ENCODE measurements at regions of chr3 and their contacts with region 1.

Region 1: DNA sequence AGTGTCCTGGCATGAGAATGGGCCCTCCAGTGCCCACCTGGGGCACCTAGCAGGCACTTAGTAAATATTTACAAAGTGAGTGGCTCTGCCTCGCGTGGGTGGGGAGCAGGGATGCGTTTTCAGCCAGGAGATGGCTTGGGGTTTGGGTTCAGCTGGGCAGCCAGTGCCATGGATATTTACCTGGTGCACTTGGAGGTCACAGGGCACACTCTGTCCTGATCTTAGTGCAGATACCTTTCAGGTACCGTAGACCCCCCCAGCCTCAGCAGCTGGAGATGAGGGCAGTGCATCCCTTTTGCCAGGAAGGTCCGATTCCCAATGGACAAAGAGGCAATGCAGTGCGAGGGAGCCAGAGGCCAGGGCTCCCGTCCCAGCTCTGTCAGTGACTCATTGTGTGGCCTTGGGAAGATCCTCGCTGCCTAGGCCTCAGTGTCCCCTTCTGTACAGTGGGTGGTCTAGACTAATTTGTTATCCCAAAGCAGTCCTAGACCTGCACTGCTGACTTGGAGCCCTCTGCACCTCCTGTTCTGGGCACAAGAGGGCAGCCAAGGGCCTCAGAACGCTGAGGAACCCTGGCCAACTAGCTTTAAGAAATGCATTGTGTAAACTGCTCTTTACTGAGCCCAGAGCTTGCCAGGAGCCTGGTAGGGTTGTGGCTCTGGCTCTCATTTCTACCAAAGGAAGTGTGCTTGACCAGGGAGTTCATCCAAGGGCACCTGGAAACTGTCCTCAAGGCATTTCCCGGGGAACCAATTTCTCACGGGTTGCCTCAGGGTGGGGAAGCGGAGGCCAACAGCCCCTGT is 16.0 kb downstream of the HDAC11 start:
- DNase-seq: peak; percentile 54 to 91
- H3K4me3 ChIP-seq: no peak overlapping the region
- H3K27ac ChIP-seq: no peak overlapping the region
- H3K4me1 ChIP-seq: peaks cover 0 to 3% (median 1%) of the 10 kb centered on the region in 4 experiments; a peak in 2 of 7 replicates
- H3K27me3 ChIP-seq: no peaks in the 10 kb centered on the region
- CTCF ChIP-seq: peak in 2 of 3 experiments; percentile 98; a peak in 3 of 4 replicates
- EP300 ChIP-seq: no peak
- POLR2A ChIP-seq: no peak
- RAD21 ChIP-seq: peak; percentile 99 to 100

Region 2: GRCh38 chr3:13479581-13480339 is 16.4 kb before region 1 on chr3 and contains the start of gene HDAC11:
- CTCF ChIA-PET with region 1: interaction called, 159 read pairs
- POLR2A ChIA-PET with region 1: no interaction called
- DNase-seq: peak; percentile 98 to 99
- H3K4me3 ChIP-seq: peak within 1 kb of the TSS; percentile 54 to 80 (median 72)
- H3K27ac ChIP-seq: peak within 1 kb of the TSS; percentile 58
- H3K4me1 ChIP-seq: peaks cover 3 to 20% (median 8%) of the 10 kb centered on the region in 4 experiments
- H3K27me3 ChIP-seq: peaks cover 0 to 10% (median 5%) of the 10 kb centered on the region in 4 experiments; a peak in 5 of 7 replicates
- CTCF ChIP-seq: peak in 1 of 3 experiments; percentile 17; a peak in 1 of 4 replicates
- EP300 ChIP-seq: no peak; a peak in 1 of 3 replicates
- POLR2A ChIP-seq: peak in 1 of 2 experiments; percentile 70; a peak in 2 of 3 replicates
- RAD21 ChIP-seq: no peak
- total RNA-seq, gene HDAC11: 7.4 and 7.5 TPM in 2 replicates

Region 3: GRCh38 chr3:13559764-13560525 is 63.8 kb after region 1 on chr3:
- CTCF ChIA-PET with region 1: interaction called, 856 read pairs
- POLR2A ChIA-PET with region 1: no interaction called
- DNase-seq: no peak
- H3K4me3 ChIP-seq: no peak overlapping the region
- H3K27ac ChIP-seq: no peak overlapping the region
- H3K4me1 ChIP-seq: peaks cover 0 to 12% (median 4%) of the 10 kb centered on the region in 4 experiments; a peak in 5 of 7 replicates
- H3K27me3 ChIP-seq: no peaks in the 10 kb centered on the region
- CTCF ChIP-seq: no peak
- EP300 ChIP-seq: no peak
- POLR2A ChIP-seq: no peak
- RAD21 ChIP-seq: no peak

Region 4: GRCh38 chr3:13584427-13585300 is 88.5 kb after region 1 on chr3:
- CTCF ChIA-PET with region 1: interaction called, 10 read pairs
- POLR2A ChIA-PET with region 1: no interaction called
- DNase-seq: no peak
- H3K4me3 ChIP-seq: no peak overlapping the region
- H3K27ac ChIP-seq: no peak overlapping the region
- H3K4me1 ChIP-seq: peaks cover 2 to 14% (median 9%) of the 10 kb centered on the region in 4 experiments; a peak in 5 of 7 replicates
- H3K27me3 ChIP-seq: no peaks in the 10 kb centered on the region; a peak in 1 of 7 replicates
- CTCF ChIP-seq: no peak
- EP300 ChIP-seq: no peak
- POLR2A ChIP-seq: no peak
- RAD21 ChIP-seq: no peak

Region 5: GRCh38 chr3:13631256-13631655 is 135.1 kb after region 1 on chr3:
- CTCF ChIA-PET with region 1: interaction called, 47 read pairs
- POLR2A ChIA-PET with region 1: no interaction called
- DNase-seq: no peak
- H3K4me3 ChIP-seq: no peak overlapping the region
- H3K27ac ChIP-seq: no peak overlapping the region
- H3K4me1 ChIP-seq: no peaks in the 10 kb centered on the region; a peak in 1 of 7 replicates
- H3K27me3 ChIP-seq: no peaks in the 10 kb centered on the region
- CTCF ChIP-seq: no peak
- EP300 ChIP-seq: no peak
- POLR2A ChIP-seq: no peak
- RAD21 ChIP-seq: no peak

Measured in H1 (cell line).